ENCODE measurements at regions of chr10 and their contacts with region 1.

Region 1: GRCh38 chr10:22615819-22616499 is 98.4 kb downstream of the PIP4K2A start:
- DNase-seq: peak; percentile 35
- ATAC-seq: peak; percentile 91
- H3K4me3 ChIP-seq: peak overlapping the region; percentile 54; the same call in 1 of the 2 replicates
- H3K27ac ChIP-seq: peak overlapping the region; percentile 73
- H3K4me1 ChIP-seq: peaks cover 57% of the 10 kb centered on the region
- H3K27me3 ChIP-seq: no peaks in the 10 kb centered on the region
- CTCF ChIP-seq: no peak
- EP300 ChIP-seq: no peak
- POLR2A ChIP-seq: peak; percentile 67
- RAD21 ChIP-seq: no peak

Region 2: DNA sequence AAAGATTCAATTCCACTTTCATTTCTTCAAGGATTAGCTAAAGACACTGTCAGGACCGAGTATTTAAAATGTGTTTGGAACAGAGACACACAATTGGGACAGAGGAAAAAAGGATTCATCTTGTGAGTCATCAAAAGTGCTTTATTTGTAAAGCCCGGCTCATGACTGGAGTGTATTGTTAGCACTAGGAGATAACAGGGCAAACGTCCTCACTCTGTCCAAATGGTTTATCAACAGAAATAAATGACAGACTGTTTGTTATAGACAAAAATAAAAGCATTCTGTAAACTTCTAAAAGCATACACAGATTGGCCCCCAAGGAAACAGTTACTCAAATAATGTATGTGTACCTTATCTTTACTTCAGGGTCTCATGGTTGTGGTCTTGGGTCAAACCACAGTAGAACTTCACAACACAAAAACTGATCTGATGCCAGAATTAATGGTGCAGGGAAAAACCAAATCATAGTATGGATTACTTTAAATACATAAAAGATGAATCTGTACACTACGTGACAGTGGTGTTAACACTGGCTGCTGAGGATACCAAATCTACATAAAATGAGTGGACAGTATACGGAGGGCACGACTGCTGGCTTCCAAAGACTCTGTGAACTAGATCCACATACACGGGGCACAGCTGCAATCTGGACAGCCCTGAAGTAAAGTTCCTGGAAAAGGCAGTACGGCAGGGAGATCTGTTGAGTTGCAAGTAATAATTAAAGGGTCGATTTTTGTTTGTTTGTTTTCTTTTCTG is 80.9 kb before region 1 on chr10:
- CTCF ChIA-PET with region 1: no interaction called
- POLR2A ChIA-PET with region 1: no interaction called
- RAD21 ChIA-PET with region 1: no interaction called
- SMC1A ChIA-PET with region 1: no interaction called
- in situ Hi-C with region 1: no loop called
- intact Hi-C with region 1: no loop called
- DNase-seq: no peak
- ATAC-seq: no peak
- H3K4me3 ChIP-seq: no peak overlapping the region
- H3K27ac ChIP-seq: no peak overlapping the region
- H3K4me1 ChIP-seq: no peaks in the 10 kb centered on the region
- H3K27me3 ChIP-seq: no peaks in the 10 kb centered on the region
- CTCF ChIP-seq: no peak
- EP300 ChIP-seq: no peak
- POLR2A ChIP-seq: no peak
- RAD21 ChIP-seq: no peak

Region 3: DNA sequence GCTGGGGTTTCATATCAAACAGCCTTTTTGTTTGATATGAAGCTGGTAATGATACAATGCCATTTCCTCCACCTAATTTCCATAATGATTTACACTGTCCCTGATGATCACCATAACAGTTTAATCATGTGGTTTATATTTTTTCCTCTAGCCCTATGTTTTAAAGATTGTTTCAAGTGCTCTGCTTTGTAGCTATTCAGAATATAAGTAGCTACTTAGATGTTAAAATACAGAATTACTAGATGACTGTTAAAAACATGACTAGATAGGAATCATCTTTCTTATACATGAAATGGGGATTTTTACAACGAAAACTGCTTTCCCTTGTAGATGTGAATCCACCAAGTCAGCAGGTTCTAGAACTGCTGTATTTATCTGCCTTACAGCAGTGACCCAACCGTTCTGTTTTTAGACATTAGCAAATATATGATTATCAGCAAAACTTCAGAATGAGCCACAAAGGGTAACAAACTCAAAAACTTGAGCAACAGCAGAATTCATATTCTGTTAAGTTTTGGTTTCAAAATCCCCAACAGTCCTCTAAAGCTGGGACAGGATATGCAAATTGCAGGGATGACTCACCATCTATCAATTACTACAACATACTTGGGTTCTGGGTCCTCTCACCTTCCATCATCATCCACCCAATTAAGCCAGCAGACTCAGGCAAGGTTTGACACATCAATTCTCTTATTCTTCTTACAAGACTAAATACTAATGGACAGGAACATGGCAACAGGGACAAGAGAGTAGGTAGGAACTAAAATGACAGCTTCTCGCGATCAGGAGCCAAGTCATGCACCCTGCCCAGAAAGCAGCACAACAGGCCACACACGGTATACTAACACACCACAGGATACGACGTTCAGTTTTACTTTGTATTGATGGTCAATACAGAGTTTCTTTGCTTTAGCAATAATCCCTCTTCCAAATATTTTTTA is 14.5 kb after region 1 on chr10:
- CTCF ChIA-PET with region 1: interaction called, 28 read pairs
- POLR2A ChIA-PET with region 1: interaction called, 82 read pairs
- RAD21 ChIA-PET with region 1: interaction called, 53 read pairs
- SMC1A ChIA-PET with region 1: interaction called, 139 read pairs
- in situ Hi-C with region 1: no loop called
- intact Hi-C with region 1: no loop called
- DNase-seq: peak; percentile 92
- ATAC-seq: peak; percentile 89
- H3K4me3 ChIP-seq: peak overlapping the region; percentile 57
- H3K27ac ChIP-seq: peak overlapping the region; percentile 89
- H3K4me1 ChIP-seq: peaks cover 42% of the 10 kb centered on the region
- H3K27me3 ChIP-seq: no peaks in the 10 kb centered on the region
- CTCF ChIP-seq: no peak
- EP300 ChIP-seq: peak; percentile 70; a peak in 3 of 4 replicates
- POLR2A ChIP-seq: no peak
- RAD21 ChIP-seq: 0 out of 2 replicates have a peak, but pooled peaks have one; percentile 13